AG04450 (cell line): ENCODE measurements at regions of chr15 and their contacts with region 1.

Region 1: DNA sequence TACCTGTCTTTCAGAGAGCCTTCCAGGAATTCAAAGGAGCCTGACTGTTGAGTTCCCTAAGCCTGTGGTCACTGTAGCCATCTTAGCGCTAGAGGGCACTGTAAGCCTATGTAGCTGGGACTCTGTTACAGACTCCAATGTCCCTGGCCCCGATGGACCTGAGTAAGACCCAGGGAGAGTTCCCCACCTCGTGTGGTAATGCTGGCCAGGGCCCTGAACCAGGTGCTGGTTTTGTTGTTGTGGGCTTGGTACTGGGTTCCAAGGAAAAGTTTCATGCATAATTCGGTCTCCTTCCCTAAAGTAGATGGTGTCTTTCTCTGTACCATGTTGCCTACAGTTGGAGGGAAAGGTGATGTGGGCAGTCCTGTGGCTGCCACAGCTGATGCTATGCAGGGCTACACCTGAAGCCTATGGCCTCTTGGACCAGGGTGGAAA is 32.4 kb downstream of the CDAN1 start:
- DNase-seq: peak; percentile 23
- H3K4me3 ChIP-seq: no peak overlapping the region
- H3K27ac ChIP-seq: no peak overlapping the region
- H3K27me3 ChIP-seq: no peaks in the 10 kb centered on the region
- CTCF ChIP-seq: peak; percentile 97

Region 2: DNA sequence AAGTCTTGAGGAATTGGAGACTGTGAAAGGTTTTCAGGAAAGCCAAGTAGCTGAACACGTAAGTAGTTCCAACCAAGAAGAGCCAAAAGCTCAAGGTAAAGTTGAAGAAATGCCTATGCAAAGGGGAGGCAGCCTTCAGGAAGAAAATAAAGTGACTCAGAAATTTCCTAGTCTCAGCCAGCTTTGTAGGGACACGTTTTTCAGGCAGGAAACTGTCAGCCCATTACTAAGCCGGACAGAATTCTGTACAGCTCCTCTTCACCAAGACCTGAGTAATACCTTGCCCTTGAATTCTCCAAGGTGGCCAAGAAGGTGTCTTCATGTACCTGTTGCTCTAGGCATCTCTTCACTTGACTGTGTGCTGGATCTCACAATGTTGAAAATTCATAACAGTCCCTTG is 16.2 kb before region 1 on chr15:
- CTCF ChIA-PET with region 1: no interaction called
- POLR2A ChIA-PET with region 1: no interaction called
- DNase-seq: no peak
- H3K4me3 ChIP-seq: no peak overlapping the region
- H3K27ac ChIP-seq: no peak overlapping the region
- H3K27me3 ChIP-seq: no peaks in the 10 kb centered on the region
- CTCF ChIP-seq: no peak

Region 3: DNA sequence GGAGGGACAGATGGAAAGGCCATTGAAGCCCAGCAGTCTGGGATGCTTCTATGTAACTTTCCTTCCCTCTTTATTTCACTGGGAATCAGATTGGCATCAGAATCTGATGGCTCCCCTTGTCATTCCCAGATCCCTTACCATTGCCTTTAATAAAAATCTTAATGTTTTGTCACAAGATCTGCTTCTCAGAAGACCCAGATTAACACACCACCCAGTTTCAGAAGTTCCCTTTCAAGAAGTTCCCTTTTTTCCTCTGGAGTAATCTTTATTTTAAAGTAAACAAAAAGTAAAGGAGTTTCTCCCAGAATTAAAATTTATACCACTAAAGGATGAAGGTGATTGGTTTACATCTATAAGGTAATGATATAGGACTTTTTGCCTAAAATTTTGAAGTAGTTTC is 325.0 kb after region 1 on chr15:
- CTCF ChIA-PET with region 1: no interaction called
- POLR2A ChIA-PET with region 1: interaction called, 13 read pairs
- DNase-seq: no peak
- H3K4me3 ChIP-seq: no peak overlapping the region
- H3K27ac ChIP-seq: no peak overlapping the region
- H3K27me3 ChIP-seq: no peaks in the 10 kb centered on the region
- CTCF ChIP-seq: no peak